ENCODE measurements at regions of chrX and their contacts with region 1.

Region 1: GRCh38 chrX:114976292-114976691 is 41.1 kb downstream of the IL13RA2 start:
- DNase-seq: no peak
- H3K4me3 ChIP-seq: no peak overlapping the region
- H3K4me1 ChIP-seq: peaks cover 3% of the 10 kb centered on the region; the same call in 1 of the 2 replicates
- H3K27me3 ChIP-seq: no peaks in the 10 kb centered on the region

Region 2: GRCh38 chrX:114787061-114787460 is 189.2 kb before region 1 on chrX:
- in situ Hi-C with region 1: no loop called
- DNase-seq: no peak
- H3K4me3 ChIP-seq: no peak overlapping the region
- H3K4me1 ChIP-seq: peaks cover 3% of the 10 kb centered on the region; the same call in 1 of the 2 replicates
- H3K27me3 ChIP-seq: no peaks in the 10 kb centered on the region

Region 3: GRCh38 chrX:115226929-115227328 is 250.6 kb after region 1 on chrX:
- in situ Hi-C with region 1: no loop called
- DNase-seq: peak; percentile 55 to 70
- H3K4me3 ChIP-seq: no peak overlapping the region
- H3K4me1 ChIP-seq: peaks cover 44% of the 10 kb centered on the region
- H3K27me3 ChIP-seq: no peaks in the 10 kb centered on the region

Region 4: GRCh38 chrX:115284877-115285276 is 308.6 kb after region 1 on chrX:
- in situ Hi-C with region 1: loop called (anchors 25 kb)
- DNase-seq: peak in 1 of 2 experiments; percentile 21
- H3K4me3 ChIP-seq: no peak overlapping the region
- H3K4me1 ChIP-seq: peaks cover 10% of the 10 kb centered on the region
- H3K27me3 ChIP-seq: 0 out of 2 replicates have a peak, but pooled peaks cover 2% of the 10 kb centered on the region